B cell (primary cell): ENCODE measurements at regions of chr15 and their contacts with region 1.

Region 1: DNA sequence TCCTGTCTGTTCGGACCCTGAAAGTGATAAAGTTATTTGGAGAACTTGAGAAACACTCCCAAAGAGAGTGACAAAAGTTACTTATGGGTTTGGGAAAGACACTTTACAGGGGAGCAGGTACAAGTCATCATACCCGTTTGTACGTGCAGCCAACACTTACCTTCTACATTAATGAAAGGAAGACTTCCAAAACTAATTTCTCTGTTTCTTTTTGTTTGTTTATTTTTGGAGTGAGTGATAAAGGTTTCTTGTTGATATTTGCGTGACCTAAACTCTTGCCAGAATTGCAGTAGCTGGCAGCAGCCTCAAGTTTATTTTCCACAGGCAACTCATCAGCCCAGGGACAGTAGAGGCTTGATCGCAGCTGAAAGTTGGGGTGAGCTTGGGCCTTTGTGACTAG is 8.4 kb downstream of the ABHD2 start:
- DNase-seq: no peak
- ATAC-seq: no peak
- H3K4me3 ChIP-seq: no peak overlapping the region
- H3K4me3 Mint-ChIP-seq: no peak overlapping the region
- H3K27ac ChIP-seq: no peak overlapping the region
- H3K27ac Mint-ChIP-seq: no peak overlapping the region
- H3K4me1 ChIP-seq: peaks cover 4% of the 10 kb centered on the region in 2 donors
- H3K4me1 Mint-ChIP-seq: peaks cover 5% of the 10 kb centered on the region
- H3K27me3 ChIP-seq: no peaks in the 10 kb centered on the region
- H3K27me3 Mint-ChIP-seq: no peaks in the 10 kb centered on the region
- CTCF ChIP-seq: no peak

Region 2: GRCh38 chr15:89057504-89058133 is 39.0 kb before region 1 on chr15:
- CTCF ChIA-PET with region 1: interaction called, 11 read pairs
- POLR2A ChIA-PET with region 1: no interaction called
- intact Hi-C with region 1: no loop called
- DNase-seq: peak; percentile 74
- ATAC-seq: peak; percentile 91
- H3K4me3 ChIP-seq: no peak overlapping the region
- H3K4me3 Mint-ChIP-seq: no peak overlapping the region
- H3K27ac ChIP-seq: no peak overlapping the region
- H3K27ac Mint-ChIP-seq: no peak overlapping the region
- H3K4me1 ChIP-seq: no peaks in the 10 kb centered on the region
- H3K4me1 Mint-ChIP-seq: no peaks in the 10 kb centered on the region
- H3K27me3 ChIP-seq: peaks cover 0 to 8% (median 0%) of the 10 kb centered on the region in 4 experiments
- H3K27me3 Mint-ChIP-seq: peaks cover 14% of the 10 kb centered on the region
- CTCF ChIP-seq: peak; percentile 95

Region 3: GRCh38 chr15:89136818-89137772 is 40.4 kb after region 1 on chr15:
- CTCF ChIA-PET with region 1: no interaction called
- POLR2A ChIA-PET with region 1: no interaction called
- intact Hi-C with region 1: no loop called
- DNase-seq: no peak
- ATAC-seq: no peak
- H3K4me3 ChIP-seq: no peak overlapping the region
- H3K4me3 Mint-ChIP-seq: no peak overlapping the region
- H3K27ac ChIP-seq: no peak overlapping the region
- H3K27ac Mint-ChIP-seq: no peak overlapping the region
- H3K4me1 ChIP-seq: peaks cover 4 to 5% of the 10 kb centered on the region in 2 donors
- H3K4me1 Mint-ChIP-seq: peaks cover 11% of the 10 kb centered on the region
- H3K27me3 ChIP-seq: no peaks in the 10 kb centered on the region
- H3K27me3 Mint-ChIP-seq: no peaks in the 10 kb centered on the region
- CTCF ChIP-seq: no peak

Region 4: DNA sequence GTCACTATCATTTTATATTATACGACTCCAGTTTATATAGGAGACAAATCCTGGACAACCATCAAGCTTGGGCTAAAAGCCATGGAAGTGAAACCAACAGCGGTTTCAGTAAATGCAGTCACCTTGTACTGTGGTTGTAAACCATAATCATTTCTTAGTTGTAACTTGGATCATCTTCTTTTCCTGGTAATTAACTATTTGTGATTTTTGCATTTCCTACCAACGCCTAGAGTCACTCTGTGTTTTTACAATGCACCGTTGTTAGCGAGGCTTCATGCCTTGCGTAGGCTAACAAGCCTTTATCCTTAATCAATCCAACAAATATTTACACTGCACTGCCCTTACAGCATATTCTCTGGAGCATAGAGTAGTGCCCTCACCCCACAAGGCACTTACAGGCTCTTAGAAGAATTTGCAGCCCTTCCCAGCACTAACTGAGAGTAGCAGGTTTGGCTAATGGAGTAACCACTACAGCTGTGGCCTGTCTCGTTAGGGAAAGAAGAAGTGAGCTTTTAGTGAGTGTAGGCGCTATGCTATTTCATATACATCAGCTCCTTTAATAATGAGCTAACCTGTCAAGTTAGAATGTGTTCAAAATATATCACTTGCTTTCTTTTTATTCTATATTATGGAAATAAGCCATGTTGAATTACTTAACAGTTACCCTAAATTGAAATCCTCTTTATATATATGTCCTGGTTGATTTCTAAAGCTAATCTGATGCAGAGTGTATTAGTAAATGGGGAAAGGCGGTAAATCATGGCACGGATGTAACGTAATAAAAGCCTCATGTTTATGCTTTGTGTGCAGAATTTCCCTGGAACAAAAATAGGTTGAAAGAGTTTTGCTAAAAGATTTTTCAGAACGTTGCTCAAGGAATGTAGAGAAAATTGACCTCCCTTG is 54.3 kb after region 1 on chr15:
- CTCF ChIA-PET with region 1: no interaction called
- POLR2A ChIA-PET with region 1: no interaction called
- intact Hi-C with region 1: no loop called
- DNase-seq: no peak
- ATAC-seq: no peak
- H3K4me3 ChIP-seq: no peak overlapping the region
- H3K4me3 Mint-ChIP-seq: no peak overlapping the region
- H3K27ac ChIP-seq: no peak overlapping the region
- H3K27ac Mint-ChIP-seq: no peak overlapping the region
- H3K4me1 ChIP-seq: no peaks in the 10 kb centered on the region
- H3K4me1 Mint-ChIP-seq: no peaks in the 10 kb centered on the region
- H3K27me3 ChIP-seq: no peaks in the 10 kb centered on the region
- H3K27me3 Mint-ChIP-seq: no peaks in the 10 kb centered on the region
- CTCF ChIP-seq: no peak